ENCODE measurements at regions of chr20 and their contacts with region 1.

Region 1: DNA sequence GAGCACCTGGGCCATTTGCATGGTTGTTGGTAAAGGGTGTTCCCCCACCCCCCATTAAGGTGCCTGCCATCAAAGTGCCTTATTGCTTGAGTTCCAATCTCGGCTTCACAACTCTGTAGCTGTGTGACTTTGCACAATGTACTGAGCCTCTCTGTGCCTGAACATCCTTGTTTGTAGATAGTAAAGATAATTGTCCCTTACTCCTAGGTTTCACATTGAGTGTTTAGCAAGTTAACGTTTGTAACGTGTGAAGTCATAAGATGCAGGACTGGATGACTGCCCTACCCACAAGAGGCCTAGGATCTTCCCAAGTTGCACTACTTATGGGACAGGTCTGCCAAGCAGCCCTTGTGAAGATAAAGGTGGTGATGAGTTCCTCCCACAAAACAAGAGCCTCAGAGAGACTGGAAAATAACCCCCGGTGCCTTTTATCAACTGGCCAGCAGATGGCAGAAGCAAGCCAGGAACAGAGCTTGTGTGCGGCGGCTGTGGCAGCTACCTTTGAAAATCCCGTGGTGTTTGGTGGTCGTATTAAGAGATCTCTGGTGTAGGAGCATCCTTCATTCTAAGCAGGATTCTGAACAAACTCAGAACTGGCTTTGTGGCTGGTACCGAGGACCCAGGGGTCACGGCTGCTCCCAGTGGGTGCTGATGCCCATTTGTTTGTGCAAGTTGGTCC is 99.0 kb downstream of the CDH26 start:
- DNase-seq: peak; percentile 73
- H3K4me3 Mint-ChIP-seq: no peak overlapping the region
- H3K27ac Mint-ChIP-seq: no peak overlapping the region
- H3K4me1 Mint-ChIP-seq: peaks cover 24% of the 10 kb centered on the region
- H3K27me3 Mint-ChIP-seq: no peaks in the 10 kb centered on the region
- CTCF ChIP-seq: peak; percentile 83

Region 2: GRCh38 chr20:59588236-59588855 is 468.9 kb before region 1 on chr20:
- CTCF ChIA-PET with region 1: no interaction called
- POLR2A ChIA-PET with region 1: no interaction called
- intact Hi-C with region 1: no loop called
- DNase-seq: no peak
- H3K4me3 Mint-ChIP-seq: no peak overlapping the region
- H3K27ac Mint-ChIP-seq: no peak overlapping the region
- H3K4me1 Mint-ChIP-seq: no peaks in the 10 kb centered on the region
- H3K27me3 Mint-ChIP-seq: peaks cover 66% of the 10 kb centered on the region
- CTCF ChIP-seq: no peak

Region 3: DNA sequence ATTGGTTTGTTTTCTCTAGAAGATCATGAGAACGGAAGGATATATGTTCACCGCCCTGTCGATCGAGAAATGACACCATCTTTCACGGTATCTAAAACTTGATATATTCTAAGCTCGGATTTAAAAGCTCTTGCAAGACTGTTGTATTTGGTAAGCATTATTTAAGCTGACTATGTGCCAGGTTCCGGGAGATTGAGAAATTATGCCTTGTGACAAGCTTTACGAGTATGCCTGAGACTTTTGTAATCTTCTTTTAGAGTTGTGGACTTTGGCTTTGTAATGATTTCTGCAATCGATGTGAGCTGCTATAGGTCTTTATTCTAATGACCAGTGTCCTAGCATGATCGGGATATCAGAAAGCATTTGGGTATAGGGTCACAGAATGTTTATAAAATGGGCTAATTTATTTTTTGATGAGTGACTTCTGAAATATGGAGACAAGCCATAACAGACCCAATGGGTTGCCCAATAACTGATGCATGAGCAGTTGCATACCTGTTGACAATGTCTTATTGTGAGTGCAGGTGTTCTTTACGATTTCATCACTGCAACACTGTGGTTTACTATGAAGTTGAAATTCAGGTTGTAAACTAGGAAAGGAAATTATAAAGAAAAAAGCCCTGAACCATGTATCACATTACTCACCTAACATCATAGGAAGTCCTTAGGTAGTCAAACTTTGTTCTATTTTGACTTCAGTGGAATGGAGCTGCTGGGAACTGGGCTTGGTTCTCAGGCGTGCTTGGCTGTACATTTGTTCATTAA is 85.0 kb before region 1 on chr20:
- CTCF ChIA-PET with region 1: interaction called, 11 read pairs
- POLR2A ChIA-PET with region 1: interaction called, 4 read pairs
- intact Hi-C with region 1: no loop called
- DNase-seq: peak; percentile 82
- H3K4me3 Mint-ChIP-seq: peak overlapping the region; percentile 37
- H3K27ac Mint-ChIP-seq: peak overlapping the region; percentile 80
- H3K4me1 Mint-ChIP-seq: peaks cover 20% of the 10 kb centered on the region
- H3K27me3 Mint-ChIP-seq: no peaks in the 10 kb centered on the region
- CTCF ChIP-seq: no peak

Region 4: GRCh38 chr20:60137629-60138245 is 80.5 kb after region 1 on chr20:
- CTCF ChIA-PET with region 1: interaction called, 17 read pairs
- POLR2A ChIA-PET with region 1: interaction called, 3 read pairs
- intact Hi-C with region 1: no loop called
- DNase-seq: peak; percentile 65
- H3K4me3 Mint-ChIP-seq: peak overlapping the region; percentile 80
- H3K27ac Mint-ChIP-seq: no peak overlapping the region
- H3K4me1 Mint-ChIP-seq: peaks cover 1% of the 10 kb centered on the region
- H3K27me3 Mint-ChIP-seq: peaks cover 12% of the 10 kb centered on the region
- CTCF ChIP-seq: peak; percentile 71

Region 5: DNA sequence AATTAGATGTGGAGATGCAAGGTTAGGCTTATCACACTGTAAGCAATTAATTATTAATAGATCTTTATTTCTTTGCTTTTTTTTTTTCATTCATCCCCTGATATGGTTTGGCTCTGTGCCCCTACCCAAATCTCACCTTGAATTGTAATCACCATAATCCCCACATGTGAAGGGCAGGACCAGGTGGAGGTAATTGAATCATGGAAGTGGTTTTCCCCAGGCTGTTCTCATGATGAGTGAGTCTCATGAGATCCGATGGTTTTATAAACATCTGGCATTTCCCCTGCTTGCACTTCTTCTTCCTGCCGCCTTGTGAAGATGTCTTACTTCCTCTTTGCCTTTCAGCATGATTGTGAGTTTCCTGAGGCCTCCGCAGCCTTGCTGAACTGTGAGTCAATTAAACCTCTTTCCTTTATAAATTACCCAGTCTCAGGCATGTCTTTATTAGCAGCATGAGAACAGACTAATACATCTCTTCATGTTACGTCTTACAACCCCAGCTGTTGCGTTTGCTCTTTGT is 234.8 kb after region 1 on chr20:
- CTCF ChIA-PET with region 1: no interaction called
- POLR2A ChIA-PET with region 1: no interaction called
- intact Hi-C with region 1: no loop called
- DNase-seq: no peak
- H3K4me3 Mint-ChIP-seq: no peak overlapping the region
- H3K27ac Mint-ChIP-seq: no peak overlapping the region
- H3K4me1 Mint-ChIP-seq: no peaks in the 10 kb centered on the region
- H3K27me3 Mint-ChIP-seq: no peaks in the 10 kb centered on the region
- CTCF ChIP-seq: no peak

Region 6: DNA sequence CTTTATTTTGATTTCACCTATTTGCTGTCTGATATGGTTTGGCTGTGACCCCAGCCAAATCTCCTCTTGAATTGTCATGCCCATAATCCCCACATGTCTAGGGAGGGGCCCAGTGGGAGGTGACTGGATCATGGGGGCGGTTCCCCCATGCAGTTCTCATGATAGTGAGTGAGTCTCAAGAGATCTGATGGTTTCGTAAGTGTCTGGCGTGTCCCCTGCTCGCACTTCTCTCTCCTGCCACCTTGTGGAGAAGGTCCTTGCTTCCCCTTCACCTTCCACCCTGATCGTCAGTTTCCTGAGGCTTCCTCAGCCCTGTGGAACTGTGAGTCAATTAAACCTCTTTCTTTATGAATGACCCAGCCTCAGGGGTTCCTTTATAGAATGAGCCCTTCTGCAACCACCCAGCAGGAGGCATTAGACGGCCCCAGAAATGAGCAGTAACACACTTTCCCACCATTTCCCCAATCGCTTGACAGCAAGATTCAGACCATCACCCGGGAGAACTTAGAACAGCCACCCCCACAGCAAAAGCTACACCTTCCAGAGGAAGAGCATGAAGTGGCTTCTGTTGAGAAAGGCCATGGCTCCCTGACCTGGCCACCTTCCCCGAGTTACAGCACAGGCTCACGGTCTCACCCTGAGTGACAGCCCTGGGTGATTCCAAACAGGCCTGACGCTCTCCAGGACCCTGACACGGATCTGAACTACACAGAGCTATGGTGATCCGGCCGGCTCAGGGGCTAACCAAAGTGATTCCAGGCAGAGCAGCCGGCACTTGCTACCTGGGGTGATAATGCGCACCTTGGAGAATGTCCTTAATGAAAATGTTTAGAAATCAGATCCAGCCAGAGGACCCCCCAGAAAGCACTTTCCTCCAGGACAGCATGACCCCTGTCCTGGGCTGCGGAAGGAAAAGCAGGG is 1063.6 kb after region 1 on chr20:
- CTCF ChIA-PET with region 1: interaction called, 12 read pairs
- POLR2A ChIA-PET with region 1: no interaction called
- intact Hi-C with region 1: no loop called
- DNase-seq: peak; percentile 83
- H3K4me3 Mint-ChIP-seq: no peak overlapping the region
- H3K27ac Mint-ChIP-seq: no peak overlapping the region
- H3K4me1 Mint-ChIP-seq: peaks cover 6% of the 10 kb centered on the region
- H3K27me3 Mint-ChIP-seq: peaks cover 41% of the 10 kb centered on the region
- CTCF ChIP-seq: peak; percentile 61

Region 7: GRCh38 chr20:61896058-61896961 is 1839.0 kb after region 1 on chr20:
- CTCF ChIA-PET with region 1: interaction called, 17 read pairs
- POLR2A ChIA-PET with region 1: no interaction called
- intact Hi-C with region 1: no loop called
- DNase-seq: peak; percentile 49
- H3K4me3 Mint-ChIP-seq: no peak overlapping the region
- H3K27ac Mint-ChIP-seq: no peak overlapping the region
- H3K4me1 Mint-ChIP-seq: no peaks in the 10 kb centered on the region
- H3K27me3 Mint-ChIP-seq: no peaks in the 10 kb centered on the region
- CTCF ChIP-seq: peak; percentile 62